Upper lobe of right lung (tissue), 1 donor: ENCODE measurements at regions of chr14 and their contacts with region 1.

Region 1: GRCh38 chr14:61025251-61026223 is 44.5 kb downstream of the SLC38A6 start:
- DNase-seq: no peak
- ATAC-seq: peak; percentile 85
- H3K4me3 ChIP-seq: no peak overlapping the region
- H3K27ac ChIP-seq: no peak overlapping the region
- H3K4me1 ChIP-seq: no peaks in the 10 kb centered on the region
- H3K27me3 ChIP-seq: no peaks in the 10 kb centered on the region
- CTCF ChIP-seq: peak; percentile 92

Region 2: GRCh38 chr14:60637479-60638315 is 387.8 kb before region 1 on chr14:
- intact Hi-C with region 1: loop called (anchors 10 kb)
- DNase-seq: no peak
- ATAC-seq: peak; percentile 53
- H3K4me3 ChIP-seq: peak overlapping the region; percentile 12
- H3K27ac ChIP-seq: no peak overlapping the region
- H3K4me1 ChIP-seq: peaks cover 10% of the 10 kb centered on the region
- H3K27me3 ChIP-seq: peaks cover 71% of the 10 kb centered on the region
- CTCF ChIP-seq: no peak

Region 3: GRCh38 chr14:60951776-60952435 is 73.6 kb before region 1 on chr14:
- intact Hi-C with region 1: no loop called
- DNase-seq: no peak
- ATAC-seq: no peak
- H3K4me3 ChIP-seq: no peak overlapping the region
- H3K27ac ChIP-seq: no peak overlapping the region
- H3K4me1 ChIP-seq: no peaks in the 10 kb centered on the region
- H3K27me3 ChIP-seq: no peaks in the 10 kb centered on the region
- CTCF ChIP-seq: no peak

Region 4: GRCh38 chr14:60980811-60981632 is 44.5 kb before region 1 on chr14 and contains the starts of genes SLC38A6 and TRMT5:
- intact Hi-C with region 1: no loop called
- DNase-seq: peak; percentile 96
- ATAC-seq: peak; percentile 98
- H3K4me3 ChIP-seq: peak within 1 kb of the TSS; percentile 64
- H3K27ac ChIP-seq: peak within 1 kb of the TSS; percentile 83
- H3K4me1 ChIP-seq: peaks cover 27% of the 10 kb centered on the region
- H3K27me3 ChIP-seq: no peaks in the 10 kb centered on the region
- CTCF ChIP-seq: no peak
- total RNA-seq, gene SLC38A6: 24.3 TPM
- total RNA-seq, gene TRMT5: 11.3 TPM

Region 5: DNA sequence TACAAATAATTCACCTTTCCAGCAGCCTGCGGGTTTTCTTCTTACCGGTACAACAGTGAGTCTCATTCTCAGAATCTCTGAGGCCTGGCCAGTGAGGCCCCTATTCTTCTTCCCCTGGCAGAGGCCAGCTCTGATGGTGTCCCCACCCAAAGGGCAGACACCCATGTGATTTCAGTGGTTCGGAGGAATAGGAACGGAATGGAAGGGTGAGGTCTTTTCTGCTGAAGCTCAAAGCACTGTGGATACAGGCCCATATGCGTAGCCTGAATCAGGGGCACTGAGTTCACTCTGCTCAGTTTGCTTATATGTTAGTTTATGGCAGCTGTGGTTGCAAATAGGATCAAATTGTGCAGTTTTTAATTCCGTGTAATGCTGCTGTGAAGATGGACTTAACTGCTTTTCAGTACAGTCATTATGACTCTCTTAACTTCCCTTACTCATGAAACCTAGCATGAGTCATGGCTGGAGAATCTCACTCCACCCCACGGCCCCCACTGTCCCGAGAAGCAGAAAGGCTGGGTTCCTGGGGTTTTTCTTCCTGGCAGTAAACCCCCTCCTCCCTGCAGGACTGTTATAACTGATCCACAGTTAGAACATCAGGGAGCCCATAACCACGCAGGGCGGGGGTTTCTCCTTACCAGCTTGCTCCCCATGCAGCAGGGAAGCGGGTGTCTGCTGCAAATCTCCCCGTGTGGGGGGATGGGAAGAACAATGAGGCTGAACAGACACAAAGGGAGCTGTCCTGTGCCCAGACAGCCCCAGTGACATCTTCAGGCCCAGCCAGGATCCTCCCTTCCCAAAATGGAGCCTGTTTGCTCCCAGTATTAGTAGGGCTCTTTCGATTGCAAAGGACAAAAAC is 78.2 kb after region 1 on chr14:
- intact Hi-C with region 1: no loop called
- DNase-seq: no peak
- ATAC-seq: peak; percentile 80
- H3K4me3 ChIP-seq: no peak overlapping the region
- H3K27ac ChIP-seq: peak overlapping the region; percentile 48
- H3K4me1 ChIP-seq: peaks cover 35% of the 10 kb centered on the region
- H3K27me3 ChIP-seq: no peaks in the 10 kb centered on the region
- CTCF ChIP-seq: no peak